OCI-LY7 (cell line): ENCODE measurements at regions of chrX and their contacts with region 1.

Region 1: GRCh38 chrX:13791559-13791958 is 25.3 kb downstream of the GPM6B start:
- DNase-seq: no peak
- H3K4me3 ChIP-seq: no peak overlapping the region
- H3K27ac ChIP-seq: no peak overlapping the region
- H3K4me1 ChIP-seq: peaks cover 13% of the 10 kb centered on the region
- CTCF ChIP-seq: no peak

Region 2: DNA sequence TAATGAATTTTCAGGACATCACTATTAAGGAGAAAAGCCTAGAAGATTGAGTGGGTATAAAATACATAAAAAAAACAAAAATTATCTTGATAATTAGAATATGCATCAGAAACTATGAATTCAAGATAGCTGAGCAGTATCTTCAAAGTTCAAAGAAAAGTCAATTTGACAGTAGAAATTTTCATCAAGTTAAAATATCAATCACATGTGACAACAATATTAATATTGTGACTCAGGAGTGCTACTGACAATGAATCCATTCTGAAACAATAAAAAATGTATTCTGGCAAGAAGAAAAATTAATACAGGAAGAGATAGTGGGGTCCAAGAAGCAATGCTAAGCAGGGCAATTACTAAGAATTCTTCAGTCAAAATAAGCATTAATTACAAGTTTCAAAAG is 585.9 kb after region 1 on chrX:
- CTCF ChIA-PET with region 1: no interaction called
- POLR2A ChIA-PET with region 1: interaction called, 11 read pairs
- intact Hi-C with region 1: no loop called
- DNase-seq: no peak
- H3K4me3 ChIP-seq: no peak overlapping the region
- H3K27ac ChIP-seq: no peak overlapping the region
- H3K4me1 ChIP-seq: no peaks in the 10 kb centered on the region
- CTCF ChIP-seq: no peak